Mammary epithelial cell (primary cell): ENCODE measurements at regions of chr20 and their contacts with region 1.

Region 1: GRCh38 chr20:17854307-17854903 is 114.2 kb downstream of the SNX5 start:
- DNase-seq: peak; percentile 27
- H3K4me3 ChIP-seq: no peak overlapping the region
- H3K27ac ChIP-seq: no peak overlapping the region
- H3K4me1 ChIP-seq: peaks cover 37% of the 10 kb centered on the region
- H3K27me3 ChIP-seq: no peaks in the 10 kb centered on the region
- CTCF ChIP-seq: no peak

Region 2: DNA sequence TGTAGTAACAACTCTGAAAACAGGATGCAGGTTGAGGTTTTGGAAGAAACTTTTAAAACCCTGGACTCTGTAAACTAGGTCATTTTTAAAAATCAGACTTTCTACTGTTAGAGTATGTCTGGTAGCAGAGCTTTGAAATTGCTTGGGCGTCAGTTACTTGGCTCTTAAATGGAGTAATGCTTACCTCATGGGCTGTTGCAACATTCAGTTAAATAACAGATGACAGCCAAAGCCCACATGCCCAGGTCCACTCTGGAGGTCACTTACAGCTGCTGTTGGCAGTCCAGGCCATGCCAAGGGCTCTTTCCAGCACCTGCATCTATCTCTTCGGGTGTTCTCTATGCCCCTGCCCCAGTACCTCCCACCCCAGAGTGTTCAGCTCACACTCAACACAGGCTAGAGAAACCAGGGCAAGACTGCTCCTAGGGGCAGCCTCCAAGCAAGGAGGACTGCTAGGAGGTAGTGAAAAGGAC is 58.3 kb before region 1 on chr20:
- CTCF ChIA-PET with region 1: no interaction called
- dilution Hi-C with region 1: no loop called
- in situ Hi-C with region 1: no loop called
- intact Hi-C with region 1: loop called (anchors 5 kb)
- DNase-seq: no peak
- H3K4me3 ChIP-seq: no peak overlapping the region
- H3K27ac ChIP-seq: no peak overlapping the region
- H3K4me1 ChIP-seq: peaks cover 13% of the 10 kb centered on the region
- H3K27me3 ChIP-seq: no peaks in the 10 kb centered on the region
- CTCF ChIP-seq: no peak

Region 3: DNA sequence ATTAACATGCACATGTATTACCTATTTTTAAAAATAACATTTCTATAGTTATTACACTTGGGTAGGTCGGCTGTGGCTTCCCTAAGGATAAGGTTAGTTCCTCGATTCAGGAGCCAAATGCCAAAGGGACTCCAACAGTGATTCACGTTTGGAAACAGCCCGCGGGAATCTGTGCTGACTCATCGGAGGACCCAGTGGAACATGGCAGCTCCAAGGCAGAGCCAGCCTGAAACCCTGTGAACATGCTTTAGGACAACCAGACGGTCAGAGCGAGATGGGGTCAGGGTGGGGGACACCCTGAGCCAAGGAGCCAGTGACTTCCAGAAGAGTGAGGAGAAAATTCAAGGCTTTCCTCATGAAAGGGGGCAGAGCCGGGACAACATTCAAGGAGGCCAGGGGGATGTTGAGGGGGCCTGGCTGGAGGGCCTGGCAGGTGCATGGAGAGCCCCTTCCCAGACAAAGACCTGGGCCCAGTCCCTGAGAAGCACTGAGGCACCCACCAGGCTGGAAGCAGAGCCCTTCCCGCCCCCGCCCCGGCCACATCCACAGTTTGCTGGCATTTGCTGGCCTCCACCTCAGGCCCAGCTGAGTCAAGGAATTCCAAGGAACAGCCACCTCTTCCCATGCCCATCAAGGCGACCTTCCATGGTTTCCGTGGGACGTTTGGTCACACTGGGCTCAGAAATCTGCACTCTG is 19.0 kb before region 1 on chr20:
- CTCF ChIA-PET with region 1: no interaction called
- dilution Hi-C with region 1: no loop called
- in situ Hi-C with region 1: no loop called
- intact Hi-C with region 1: loop called (anchors 2 kb)
- DNase-seq: peak; percentile 65
- H3K4me3 ChIP-seq: no peak overlapping the region
- H3K27ac ChIP-seq: peak overlapping the region; percentile 32
- H3K4me1 ChIP-seq: peaks cover 42% of the 10 kb centered on the region
- H3K27me3 ChIP-seq: no peaks in the 10 kb centered on the region
- CTCF ChIP-seq: no peak

Region 4: GRCh38 chr20:17885544-17885943 is 31.1 kb after region 1 on chr20:
- CTCF ChIA-PET with region 1: no interaction called
- dilution Hi-C with region 1: no loop called
- in situ Hi-C with region 1: no loop called
- intact Hi-C with region 1: loop called (anchors 2 kb)
- DNase-seq: no peak
- H3K4me3 ChIP-seq: no peak overlapping the region
- H3K27ac ChIP-seq: no peak overlapping the region
- H3K4me1 ChIP-seq: peaks cover 31% of the 10 kb centered on the region
- H3K27me3 ChIP-seq: no peaks in the 10 kb centered on the region
- CTCF ChIP-seq: no peak